Activated CD8-positive, alpha-beta T cell treated with anti-CD3 and anti-CD28 coated beads for 36 hours (primary cell): ENCODE measurements at regions of chr1 and their contacts with region 1.

Region 1: GRCh38 chr1:220791285-220791684 is 4.6 kb downstream of the MTARC1 start:
- DNase-seq: no peak
- ATAC-seq: no peak
- H3K4me3 Mint-ChIP-seq: no peak overlapping the region
- H3K27ac Mint-ChIP-seq: no peak overlapping the region
- H3K4me1 Mint-ChIP-seq: no peaks in the 10 kb centered on the region
- H3K27me3 Mint-ChIP-seq: peaks cover 6% of the 10 kb centered on the region
- CTCF ChIP-seq: no peak

Region 2: GRCh38 chr1:220803401-220804201 is 12.3 kb after region 1 on chr1:
- CTCF ChIA-PET with region 1: interaction called, 10 read pairs
- POLR2A ChIA-PET with region 1: no interaction called
- intact Hi-C with region 1: no loop called
- DNase-seq: peak; percentile 36
- ATAC-seq: no peak
- H3K4me3 Mint-ChIP-seq: no peak overlapping the region
- H3K27ac Mint-ChIP-seq: no peak overlapping the region
- H3K4me1 Mint-ChIP-seq: no peaks in the 10 kb centered on the region
- H3K27me3 Mint-ChIP-seq: no peaks in the 10 kb centered on the region
- CTCF ChIP-seq: peak; percentile 85